ENCODE measurements at regions of chr18 and their contacts with region 1.

Region 1: DNA sequence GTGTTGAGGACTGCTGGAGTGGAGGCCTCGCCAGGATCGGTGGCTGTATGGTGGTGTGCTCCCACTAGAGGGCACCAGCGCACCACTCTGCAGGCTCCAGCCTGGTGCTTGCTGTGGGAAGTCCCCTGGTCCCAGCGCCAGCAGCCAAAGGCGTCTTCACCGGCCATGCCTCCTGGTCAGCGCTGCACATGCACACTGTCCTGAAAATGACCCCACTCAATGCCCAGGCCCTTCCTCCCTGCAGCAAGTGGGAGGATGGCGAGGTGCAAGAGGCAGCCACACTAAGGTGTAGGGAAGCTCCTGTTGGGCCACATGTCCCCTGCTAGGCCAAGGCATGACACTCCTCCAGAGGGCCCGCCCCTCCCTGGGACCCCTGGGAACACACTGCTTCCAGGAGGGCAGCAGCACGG is 136.5 kb downstream of the CTIF start:
- DNase-seq: peak; percentile 68 to 89 (median 80)
- ATAC-seq: peak; percentile 96
- H3K4me3 ChIP-seq: no peak overlapping the region
- H3K4me3 Mint-ChIP-seq: no peak overlapping the region
- H3K27ac ChIP-seq: no peak overlapping the region
- H3K27ac Mint-ChIP-seq: no peak overlapping the region
- H3K4me1 ChIP-seq: peaks cover 4% of the 10 kb centered on the region
- H3K4me1 Mint-ChIP-seq: no peaks in the 10 kb centered on the region
- H3K27me3 ChIP-seq: no peaks in the 10 kb centered on the region
- H3K27me3 Mint-ChIP-seq: no peaks in the 10 kb centered on the region
- CTCF ChIP-seq: peak; percentile 91

Region 2: DNA sequence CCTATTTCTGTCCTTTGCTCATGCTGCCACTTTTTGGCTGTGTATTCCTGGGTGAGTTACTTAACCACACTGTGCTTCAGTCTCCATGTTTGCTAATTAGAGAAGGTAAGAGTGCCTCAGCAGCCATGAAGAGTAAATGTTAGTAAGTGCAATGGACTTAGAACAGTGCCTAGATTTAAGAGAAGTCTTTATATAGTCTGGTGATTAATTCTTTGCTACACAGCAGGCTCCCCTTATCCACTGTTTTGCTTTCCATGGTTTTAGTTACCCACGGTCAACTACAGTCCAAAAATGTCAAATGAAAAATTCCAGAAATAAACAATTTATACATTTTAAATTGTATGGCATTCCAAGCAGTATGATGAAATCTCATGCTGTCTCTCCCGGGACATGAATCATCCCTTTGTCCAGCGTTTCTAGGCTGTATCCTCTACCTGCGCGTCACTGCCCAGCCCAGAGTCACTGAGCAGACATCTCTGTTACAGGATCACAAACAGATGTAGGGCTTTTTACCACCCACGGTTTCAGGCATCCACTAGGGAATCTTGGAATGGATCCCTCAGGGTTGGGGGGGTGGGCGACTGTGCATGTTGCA is 45.5 kb before region 1 on chr18:
- CTCF ChIA-PET with region 1: no interaction called
- POLR2A ChIA-PET with region 1: no interaction called
- intact Hi-C with region 1: no loop called
- DNase-seq: no peak
- ATAC-seq: no peak
- H3K4me3 ChIP-seq: no peak overlapping the region
- H3K4me3 Mint-ChIP-seq: no peak overlapping the region
- H3K27ac ChIP-seq: no peak overlapping the region
- H3K27ac Mint-ChIP-seq: no peak overlapping the region
- H3K4me1 ChIP-seq: no peaks in the 10 kb centered on the region
- H3K4me1 Mint-ChIP-seq: no peaks in the 10 kb centered on the region
- H3K27me3 ChIP-seq: no peaks in the 10 kb centered on the region
- H3K27me3 Mint-ChIP-seq: no peaks in the 10 kb centered on the region
- CTCF ChIP-seq: no peak

Region 3: GRCh38 chr18:48693625-48694262 is 18.4 kb after region 1 on chr18:
- CTCF ChIA-PET with region 1: no interaction called
- POLR2A ChIA-PET with region 1: no interaction called
- intact Hi-C with region 1: no loop called
- DNase-seq: no peak
- ATAC-seq: no peak
- H3K4me3 ChIP-seq: no peak overlapping the region
- H3K4me3 Mint-ChIP-seq: no peak overlapping the region
- H3K27ac ChIP-seq: no peak overlapping the region
- H3K27ac Mint-ChIP-seq: no peak overlapping the region
- H3K4me1 ChIP-seq: no peaks in the 10 kb centered on the region
- H3K4me1 Mint-ChIP-seq: no peaks in the 10 kb centered on the region
- H3K27me3 ChIP-seq: no peaks in the 10 kb centered on the region
- H3K27me3 Mint-ChIP-seq: no peaks in the 10 kb centered on the region
- CTCF ChIP-seq: no peak

Region 4: DNA sequence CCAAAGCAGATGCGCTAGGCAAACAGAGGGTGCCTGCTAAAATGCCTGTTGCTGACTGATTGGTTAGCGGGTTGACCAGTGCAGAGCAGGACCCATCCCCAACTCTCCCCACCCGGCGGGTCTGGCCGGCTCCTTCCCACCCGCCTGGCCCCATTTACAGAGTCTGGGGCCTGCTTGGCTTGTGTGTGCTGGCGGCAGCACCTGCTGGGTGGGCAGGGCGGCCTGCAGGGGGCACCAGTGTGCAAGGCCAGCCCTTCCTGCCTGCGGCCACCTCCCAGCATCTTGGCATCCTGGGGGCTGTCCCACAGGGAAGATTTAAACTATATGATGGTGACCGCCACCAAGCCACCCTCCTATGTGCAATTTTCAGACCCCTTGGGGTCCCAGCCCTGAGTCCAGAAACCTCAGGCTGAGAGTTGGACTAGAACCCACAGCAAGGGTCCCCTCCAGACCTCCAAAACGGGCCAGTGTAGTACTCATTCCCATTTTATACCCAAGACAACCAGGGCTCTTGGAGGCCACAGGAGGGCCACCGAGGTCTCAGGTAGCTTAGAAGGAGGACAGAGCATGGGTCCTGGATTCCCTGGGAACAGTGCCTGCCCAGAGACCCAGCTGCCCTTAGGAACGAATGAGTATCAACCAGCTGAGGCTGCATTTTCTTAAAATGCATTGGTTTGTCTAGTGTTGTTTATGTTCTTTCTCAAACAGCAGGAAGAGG is 101.8 kb after region 1 on chr18:
- CTCF ChIA-PET with region 1: no interaction called
- POLR2A ChIA-PET with region 1: no interaction called
- intact Hi-C with region 1: loop called (anchors 1 to 5 kb)
- DNase-seq: peak; percentile 40 to 85 (median 65)
- ATAC-seq: peak; percentile 89
- H3K4me3 ChIP-seq: no peak overlapping the region
- H3K4me3 Mint-ChIP-seq: no peak overlapping the region
- H3K27ac ChIP-seq: no peak overlapping the region
- H3K27ac Mint-ChIP-seq: no peak overlapping the region
- H3K4me1 ChIP-seq: peaks cover 6% of the 10 kb centered on the region
- H3K4me1 Mint-ChIP-seq: peaks cover 2% of the 10 kb centered on the region
- H3K27me3 ChIP-seq: no peaks in the 10 kb centered on the region
- H3K27me3 Mint-ChIP-seq: peaks cover 7% of the 10 kb centered on the region
- CTCF ChIP-seq: peak; percentile 84

Region 5: GRCh38 chr18:49041435-49042245 is 366.3 kb after region 1 on chr18:
- CTCF ChIA-PET with region 1: interaction called, 6 read pairs
- POLR2A ChIA-PET with region 1: no interaction called
- intact Hi-C with region 1: loop called (anchors 2 kb)
- DNase-seq: peak in 7 of 9 experiments; percentile 21 to 63 (median 56)
- ATAC-seq: peak; percentile 56
- H3K4me3 ChIP-seq: no peak overlapping the region
- H3K4me3 Mint-ChIP-seq: no peak overlapping the region
- H3K27ac ChIP-seq: no peak overlapping the region
- H3K27ac Mint-ChIP-seq: no peak overlapping the region
- H3K4me1 ChIP-seq: no peaks in the 10 kb centered on the region
- H3K4me1 Mint-ChIP-seq: peaks cover 4% of the 10 kb centered on the region
- H3K27me3 ChIP-seq: no peaks in the 10 kb centered on the region
- H3K27me3 Mint-ChIP-seq: no peaks in the 10 kb centered on the region
- CTCF ChIP-seq: peak; percentile 28

Region 6: DNA sequence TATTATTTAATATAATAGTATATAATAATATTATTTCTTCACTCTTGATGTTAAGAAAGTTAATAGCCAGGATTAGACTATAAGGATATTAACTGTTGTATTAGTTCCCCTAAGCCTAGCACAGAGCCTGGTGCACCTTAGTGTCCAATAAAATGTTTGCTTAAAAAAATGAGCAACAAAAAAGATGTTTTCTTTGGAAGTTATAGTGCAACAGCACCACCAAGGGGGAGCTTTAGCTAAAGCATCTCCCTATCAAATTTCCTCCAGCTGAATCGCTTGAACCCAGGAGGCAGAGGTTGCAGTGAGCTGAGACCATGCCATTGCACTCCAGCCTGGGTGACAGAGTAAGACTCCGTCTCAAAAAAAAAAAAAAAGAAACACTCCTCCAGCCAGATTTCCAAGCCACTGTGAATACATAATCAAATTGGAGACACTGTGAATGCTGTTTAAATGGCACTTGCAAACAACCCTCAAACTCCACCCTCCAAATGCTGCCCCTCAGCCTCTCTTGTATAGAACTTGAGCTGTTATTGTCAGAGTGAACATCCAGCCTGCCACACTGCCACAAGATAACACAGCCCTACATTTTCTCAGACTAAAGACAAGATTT is 563.2 kb after region 1 on chr18:
- CTCF ChIA-PET with region 1: interaction called, 3 read pairs
- POLR2A ChIA-PET with region 1: no interaction called
- intact Hi-C with region 1: loop called in 1 of 2 experiments (anchors 2 kb)
- DNase-seq: peak in 2 of 9 experiments; percentile 26 to 37
- ATAC-seq: no peak
- H3K4me3 ChIP-seq: no peak overlapping the region
- H3K4me3 Mint-ChIP-seq: no peak overlapping the region
- H3K27ac ChIP-seq: no peak overlapping the region
- H3K27ac Mint-ChIP-seq: no peak overlapping the region
- H3K4me1 ChIP-seq: no peaks in the 10 kb centered on the region
- H3K4me1 Mint-ChIP-seq: no peaks in the 10 kb centered on the region
- H3K27me3 ChIP-seq: no peaks in the 10 kb centered on the region
- H3K27me3 Mint-ChIP-seq: no peaks in the 10 kb centered on the region
- CTCF ChIP-seq: peak; percentile 13

Region 7: GRCh38 chr18:49447810-49448745 is 772.7 kb after region 1 on chr18:
- CTCF ChIA-PET with region 1: interaction called, 6 read pairs
- POLR2A ChIA-PET with region 1: no interaction called
- intact Hi-C with region 1: loop called (anchors 1 kb)
- DNase-seq: peak in 6 of 9 experiments; percentile 7 to 75 (median 32)
- ATAC-seq: peak; percentile 52
- H3K4me3 ChIP-seq: no peak overlapping the region
- H3K4me3 Mint-ChIP-seq: no peak overlapping the region
- H3K27ac ChIP-seq: no peak overlapping the region
- H3K27ac Mint-ChIP-seq: no peak overlapping the region
- H3K4me1 ChIP-seq: no peaks in the 10 kb centered on the region
- H3K4me1 Mint-ChIP-seq: peaks cover 31% of the 10 kb centered on the region
- H3K27me3 ChIP-seq: no peaks in the 10 kb centered on the region
- H3K27me3 Mint-ChIP-seq: no peaks in the 10 kb centered on the region
- CTCF ChIP-seq: peak; percentile 71

Region 8: DNA sequence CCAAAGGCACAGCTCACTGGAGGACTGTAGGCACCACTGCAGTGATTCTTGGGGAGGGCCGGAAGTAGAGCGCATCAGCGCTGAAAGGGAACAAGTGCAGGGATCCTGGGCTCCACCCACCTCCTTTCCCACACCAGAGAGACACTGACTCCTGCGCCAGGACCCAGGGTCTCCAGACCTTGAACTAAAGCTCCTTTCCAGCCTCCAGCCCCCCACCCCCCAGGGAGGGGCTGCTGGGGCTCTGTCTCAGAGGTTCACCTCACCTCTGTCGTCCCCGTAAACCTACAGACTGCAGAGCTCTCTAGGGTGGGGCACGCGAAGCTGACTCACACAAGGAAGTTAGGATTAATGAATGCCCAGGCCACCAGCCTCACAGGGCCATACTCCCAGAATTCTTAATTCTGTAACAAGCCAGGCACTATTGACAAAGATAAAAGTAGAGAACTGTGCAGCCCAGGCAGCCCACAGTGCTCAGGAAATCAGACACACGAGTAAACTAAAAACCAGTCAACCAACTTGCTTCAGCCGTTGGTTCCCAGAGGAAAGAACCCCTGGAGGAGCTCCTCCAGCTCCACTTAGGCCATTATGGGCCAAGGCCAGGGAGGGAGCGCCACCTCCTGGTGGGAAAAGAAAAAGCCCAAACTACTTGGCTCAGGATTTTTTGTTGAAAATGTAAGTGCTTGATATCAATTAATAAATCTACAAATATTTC is 1183.1 kb after region 1 on chr18:
- CTCF ChIA-PET with region 1: interaction called, 6 read pairs
- POLR2A ChIA-PET with region 1: no interaction called
- intact Hi-C with region 1: loop called (anchors 1 to 2 kb)
- DNase-seq: peak; percentile 13 to 71 (median 62)
- ATAC-seq: no peak
- H3K4me3 ChIP-seq: no peak overlapping the region
- H3K4me3 Mint-ChIP-seq: no peak overlapping the region
- H3K27ac ChIP-seq: no peak overlapping the region
- H3K27ac Mint-ChIP-seq: no peak overlapping the region
- H3K4me1 ChIP-seq: no peaks in the 10 kb centered on the region
- H3K4me1 Mint-ChIP-seq: no peaks in the 10 kb centered on the region
- H3K27me3 ChIP-seq: no peaks in the 10 kb centered on the region
- H3K27me3 Mint-ChIP-seq: peaks cover 2% of the 10 kb centered on the region
- CTCF ChIP-seq: peak; percentile 81